Posterior cingulate gyrus (tissue), 11 donors: ENCODE measurements at regions of chr6 and their contacts with region 1.

Region 1: GRCh38 chr6:142952614-142953013 is 7.6 kb upstream of the HIVEP2 start:
- DNase-seq: no peak

Region 2: DNA sequence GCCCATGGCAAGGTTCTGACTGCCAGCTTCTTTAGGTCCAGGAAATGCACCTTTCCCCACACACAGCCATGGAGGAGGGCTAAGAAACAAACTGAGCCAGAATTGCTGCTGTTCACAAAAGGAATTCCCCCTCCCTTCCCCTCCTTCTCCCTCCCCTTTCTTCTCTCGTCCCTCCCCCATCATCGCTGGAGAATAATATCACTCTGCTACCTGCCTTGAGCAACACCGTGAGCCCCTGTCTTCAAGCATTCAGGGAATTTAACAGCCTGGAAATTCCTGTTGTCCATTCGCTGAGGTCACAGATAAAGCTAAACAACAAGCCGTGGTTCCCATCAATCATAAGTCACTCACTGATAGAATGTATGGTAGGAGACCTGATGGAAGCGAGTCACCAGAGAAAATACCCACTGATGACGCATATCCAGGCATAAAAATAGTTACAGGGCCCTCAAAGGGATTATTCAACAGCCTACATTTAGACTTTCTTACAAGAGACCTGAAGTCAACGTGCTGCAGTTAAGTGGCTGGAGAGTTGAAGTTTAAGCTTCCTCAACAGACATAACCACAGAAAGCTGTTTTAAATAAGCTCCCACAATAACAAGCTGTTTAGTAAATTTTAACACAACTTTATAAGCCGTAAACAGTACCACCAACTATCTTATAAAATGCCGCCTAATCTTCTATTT is 67.3 kb before region 1 on chr6:
- intact Hi-C with region 1: no loop called
- DNase-seq: no peak

Region 3: GRCh38 chr6:143015300-143015706 is 62.7 kb after region 1 on chr6:
- intact Hi-C with region 1: loop called (anchors 10 kb)
- DNase-seq: no peak